ENCODE measurements at regions of chr19 and their contacts with region 1.

Region 1: DNA sequence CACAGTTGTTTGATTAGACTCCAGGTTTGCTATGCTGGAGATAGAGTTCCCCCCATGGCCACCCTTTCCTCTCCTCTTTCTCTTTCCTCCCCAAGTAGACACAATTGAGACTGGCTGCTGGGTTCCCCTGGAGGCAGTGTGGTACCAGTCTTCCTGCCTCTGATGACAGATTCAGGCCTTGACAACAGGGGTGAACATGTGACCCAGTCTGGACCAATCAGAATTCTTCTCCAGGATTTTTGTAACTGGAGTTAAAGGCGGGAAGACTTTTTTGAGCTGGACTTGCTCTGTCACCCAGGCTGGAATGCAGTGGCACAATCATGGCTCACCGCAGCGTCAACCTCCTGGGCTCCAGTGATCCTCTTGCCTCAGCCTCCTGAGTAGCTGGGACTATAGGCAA is 48.7 kb downstream of the CCNE1 start:
- DNase-seq: no peak
- ATAC-seq: no peak
- H3K4me3 ChIP-seq: no peak overlapping the region
- H3K4me1 ChIP-seq: no peaks in the 10 kb centered on the region
- CTCF ChIP-seq: no peak

Region 2: DNA sequence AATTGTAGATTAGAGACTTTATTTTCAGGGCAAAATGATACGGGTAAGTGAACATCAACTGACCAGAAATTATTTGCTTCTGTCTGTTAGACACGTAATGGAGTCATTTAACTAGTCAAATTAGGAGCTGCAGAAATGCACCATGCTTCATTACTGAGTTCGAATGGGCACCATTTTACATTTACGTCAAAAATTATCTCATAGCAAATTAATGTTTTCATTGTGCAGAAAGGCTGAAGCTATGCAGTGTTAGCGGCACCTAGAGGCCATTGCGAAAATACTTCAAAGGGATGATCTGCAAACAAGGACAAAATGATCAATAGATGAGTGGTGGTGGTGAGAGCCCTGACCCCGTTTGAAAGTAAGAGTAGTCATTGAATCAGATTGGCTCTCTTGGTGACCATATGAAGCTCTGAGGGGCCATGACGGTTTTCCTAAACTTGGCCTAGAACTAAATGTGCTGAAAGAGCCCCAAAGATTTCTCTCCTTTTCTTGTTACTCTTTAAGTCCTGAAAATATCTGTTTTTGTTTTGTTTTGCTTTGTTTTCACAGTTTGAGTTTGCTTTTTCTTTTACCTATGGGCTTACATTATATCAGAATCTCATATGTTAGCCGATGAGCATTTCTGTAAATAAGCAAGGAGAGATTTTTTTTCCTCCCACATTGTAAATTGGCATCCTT is 789.6 kb after region 1 on chr19:
- intact Hi-C with region 1: loop called in 1 of 2 experiments (anchors 10 kb)
- DNase-seq: peak in 1 of 3 donors; percentile 38
- ATAC-seq: no peak
- H3K4me3 ChIP-seq: no peak overlapping the region
- H3K4me1 ChIP-seq: no peaks in the 10 kb centered on the region
- CTCF ChIP-seq: peak; percentile 6

Measured in mucosa of descending colon (tissue), 3 donors.